Aorta (tissue), 5 donors: ENCODE measurements at regions of chr3 and their contacts with region 1.

Region 1: GRCh38 chr3:194472290-194472920 is 14.4 kb downstream of the ATP13A3 start:
- DNase-seq: no peak
- ATAC-seq: peak; percentile 82
- H3K4me3 ChIP-seq: no peak overlapping the region
- H3K27ac ChIP-seq: no peak overlapping the region
- H3K4me1 ChIP-seq: peaks cover 0 to 2% of the 10 kb centered on the region in 2 donors
- H3K27me3 ChIP-seq: no peaks in the 10 kb centered on the region

Region 2: DNA sequence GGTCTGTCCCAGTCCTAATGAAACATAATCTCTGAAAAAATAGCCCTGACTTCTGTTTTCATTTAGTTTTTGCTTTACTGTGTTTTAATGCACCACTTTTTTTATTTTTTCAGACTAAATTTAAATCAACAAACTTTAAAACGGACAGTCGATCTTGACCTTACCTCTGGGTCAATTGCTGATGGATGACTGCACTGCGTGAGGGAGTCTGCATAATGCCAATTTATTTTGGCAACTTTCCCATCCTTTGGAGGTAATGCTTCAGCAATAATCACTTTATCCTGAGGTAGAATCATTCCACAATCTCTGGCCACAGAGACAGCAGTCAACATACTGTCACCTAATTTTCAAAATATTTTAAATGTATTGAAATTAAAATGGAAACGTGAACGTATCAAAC is 40.9 kb before region 1 on chr3:
- intact Hi-C with region 1: no loop called
- DNase-seq: no peak
- ATAC-seq: no peak
- H3K4me3 ChIP-seq: no peak overlapping the region
- H3K27ac ChIP-seq: no peak overlapping the region
- H3K4me1 ChIP-seq: no peaks in the 10 kb centered on the region
- H3K27me3 ChIP-seq: no peaks in the 10 kb centered on the region

Region 3: GRCh38 chr3:194592798-194593752 is 120.7 kb after region 1 on chr3:
- intact Hi-C with region 1: loop called (anchors 1 to 2 kb)
- DNase-seq: peak in 1 of 2 donors; percentile 75
- ATAC-seq: peak; percentile 29
- H3K4me3 ChIP-seq: no peak overlapping the region
- H3K27ac ChIP-seq: peak overlapping the region in 1 of 2 donors; percentile 90
- H3K4me1 ChIP-seq: no peaks in the 10 kb centered on the region
- H3K27me3 ChIP-seq: no peaks in the 10 kb centered on the region